Posterior vena cava (tissue), 2 donors: ENCODE measurements at regions of chr7 and their contacts with region 1.

Region 1: GRCh38 chr7:40918701-40919271 is 784.0 kb downstream of the SUGCT start:
- DNase-seq: no peak

Region 2: DNA sequence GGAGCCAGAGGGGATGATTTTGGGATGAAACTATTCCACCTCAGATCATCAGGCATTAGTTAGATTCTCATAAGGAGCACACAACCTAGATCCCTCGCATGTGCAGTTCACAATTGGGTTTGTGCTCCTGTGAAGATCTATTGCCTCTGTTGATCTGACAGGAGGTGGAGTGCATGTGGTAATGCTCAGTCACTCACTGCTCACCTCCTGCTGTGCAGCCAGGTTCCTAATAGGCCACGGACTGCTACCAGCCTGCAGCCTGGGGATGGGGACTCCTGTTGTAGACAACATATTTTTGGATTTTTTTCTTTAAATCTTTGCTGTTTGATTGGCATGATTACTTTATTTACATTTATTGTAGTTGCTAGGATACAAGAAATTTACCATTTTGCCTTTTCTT is 19.1 kb after region 1 on chr7:
- intact Hi-C with region 1: no loop called
- DNase-seq: no peak

Region 3: GRCh38 chr7:41033500-41033899 is 114.7 kb after region 1 on chr7:
- intact Hi-C with region 1: loop called in 1 of 2 experiments (anchors 10 kb)
- DNase-seq: no peak